ENCODE measurements at regions of chr13 and their contacts with region 1.

Region 1: GRCh38 chr13:74306496-74306895 is 172.3 kb upstream of the KLF12 start:
- DNase-seq: no peak
- CTCF ChIP-seq: no peak

Region 2: DNA sequence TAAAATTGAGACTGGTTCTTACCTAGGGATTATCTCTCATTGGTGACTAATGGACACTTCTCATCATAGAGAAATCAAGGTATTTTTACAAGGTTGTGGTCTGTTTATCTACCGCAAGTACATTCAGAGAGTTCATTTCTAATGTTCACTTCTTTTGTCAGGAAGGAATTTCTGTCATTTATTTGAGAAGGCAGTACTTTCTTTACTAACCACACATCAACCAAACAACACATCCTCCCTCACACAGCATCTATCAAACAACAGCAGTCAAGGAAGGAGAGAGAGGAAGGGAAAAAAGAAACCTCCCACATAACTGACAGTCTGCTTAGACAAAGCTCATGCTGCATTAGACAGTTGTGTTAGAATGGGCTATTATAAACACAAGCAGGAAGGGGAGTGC is 10.1 kb after region 1 on chr13:
- CTCF ChIA-PET with region 1: interaction called, 16 read pairs
- POLR2A ChIA-PET with region 1: no interaction called
- DNase-seq: no peak
- CTCF ChIP-seq: no peak